ENCODE measurements at regions of chr1 and their contacts with region 1.

Region 1: DNA sequence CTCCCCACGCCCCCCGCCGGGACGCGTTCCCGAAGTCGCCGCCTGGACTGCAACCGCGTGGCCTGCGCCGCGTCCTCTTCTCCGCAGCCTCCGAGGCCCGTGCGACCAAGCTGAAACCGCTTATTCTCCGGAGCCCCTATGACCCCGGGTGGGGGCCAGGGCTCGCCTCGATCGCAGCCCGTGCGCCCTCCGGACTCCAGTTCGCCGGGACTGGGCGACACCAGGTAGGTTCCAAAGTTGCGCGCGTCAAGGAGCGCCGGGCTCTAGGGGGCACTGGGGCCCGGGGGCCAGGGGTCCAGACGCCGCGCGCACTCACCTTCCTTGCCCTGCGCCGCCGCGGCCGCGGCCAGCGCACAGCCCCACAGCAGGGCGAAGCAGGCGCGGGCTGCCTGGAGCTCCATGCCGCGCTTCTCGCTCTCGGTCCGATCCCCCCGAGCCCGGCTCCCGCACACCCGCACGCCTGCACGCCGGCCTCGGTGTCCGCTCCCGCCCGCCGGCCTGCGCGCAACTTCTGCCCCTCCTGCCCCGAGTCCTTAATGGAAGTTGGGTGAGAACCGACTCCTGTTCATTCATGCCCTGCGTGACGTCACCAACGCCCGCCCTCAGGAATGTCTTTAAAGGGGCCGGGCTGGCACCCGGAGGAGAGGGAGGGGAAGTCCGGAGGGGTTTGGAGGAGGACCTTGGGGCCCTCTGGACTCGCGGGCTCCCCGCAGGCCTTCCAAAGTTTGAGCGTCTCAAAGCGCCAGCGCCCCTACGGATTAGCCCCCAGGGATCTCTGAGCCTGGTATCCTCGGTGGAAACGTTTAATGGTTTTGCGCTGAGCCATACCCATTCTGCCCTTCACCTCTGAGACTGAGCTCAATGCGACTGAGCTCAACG is at the start of gene EPHA2:
- DNase-seq: no peak
- ATAC-seq: peak; percentile 20
- H3K4me3 ChIP-seq: peak within 1 kb of the TSS; percentile 51
- H3K4me3 Mint-ChIP-seq: peak within 1 kb of the TSS; percentile 33 to 86 (median 73)
- H3K27ac ChIP-seq: no peak within 1 kb of the TSS
- H3K27ac Mint-ChIP-seq: peak within 1 kb of the TSS in 6 of 9 donors; percentile 46 to 93 (median 70)
- H3K4me1 ChIP-seq: peaks cover 24 to 38% of the 10 kb centered on the region in 2 donors
- H3K4me1 Mint-ChIP-seq: peaks cover 27 to 80% (median 55%) of the 10 kb centered on the region in 7 donors
- H3K27me3 ChIP-seq: no peaks in the 10 kb centered on the region
- H3K27me3 Mint-ChIP-seq: peaks cover 0 to 61% (median 3%) of the 10 kb centered on the region in 5 donors
- total RNA-seq, gene EPHA2: 0.59 to 0.61 TPM in 2 of 5 experiments, not detected in the others

Region 2: GRCh38 chr1:16167331-16168143 is 11.8 kb after region 1 on chr1:
- CTCF ChIA-PET with region 1: interaction called, 5 read pairs
- POLR2A ChIA-PET with region 1: interaction called, 5 read pairs
- intact Hi-C with region 1: loop called in 1 of 2 experiments (anchors 1 kb)
- DNase-seq: peak; percentile 57 to 77 (median 72)
- ATAC-seq: peak; percentile 89
- H3K4me3 ChIP-seq: peak overlapping the region; percentile 41
- H3K4me3 Mint-ChIP-seq: peak overlapping the region; percentile 56 to 85 (median 80)
- H3K27ac ChIP-seq: peak overlapping the region; percentile 53
- H3K27ac Mint-ChIP-seq: peak overlapping the region in 5 of 9 donors; percentile 29 to 72 (median 53)
- H3K4me1 ChIP-seq: peaks cover 24 to 39% of the 10 kb centered on the region in 2 donors
- H3K4me1 Mint-ChIP-seq: peaks cover 31 to 73% (median 53%) of the 10 kb centered on the region in 7 donors
- H3K27me3 ChIP-seq: no peaks in the 10 kb centered on the region
- H3K27me3 Mint-ChIP-seq: peaks cover 0 to 59% (median 0%) of the 10 kb centered on the region in 5 donors

Measured in naive thymus-derived CD4-positive, alpha-beta T cell (primary cell).